H1 (cell line): ENCODE measurements at regions of chr1 and their contacts with region 1.

Region 1: GRCh38 chr1:35210321-35211119 is 17.6 kb upstream of the SFPQ start:
- DNase-seq: peak; percentile 34 to 66
- H3K4me3 ChIP-seq: peak overlapping the region in 2 of 4 experiments; percentile 0 to 40; a peak in 2 of 8 replicates
- H3K27ac ChIP-seq: peak overlapping the region; percentile 64
- H3K4me1 ChIP-seq: peaks cover 7 to 11% (median 10%) of the 10 kb centered on the region in 4 experiments; a peak in 5 of 7 replicates
- H3K27me3 ChIP-seq: no peaks in the 10 kb centered on the region
- CTCF ChIP-seq: no peak
- EP300 ChIP-seq: no peak
- POLR2A ChIP-seq: peak in 1 of 2 experiments; percentile 52; a peak in 1 of 3 replicates
- RAD21 ChIP-seq: no peak

Region 2: DNA sequence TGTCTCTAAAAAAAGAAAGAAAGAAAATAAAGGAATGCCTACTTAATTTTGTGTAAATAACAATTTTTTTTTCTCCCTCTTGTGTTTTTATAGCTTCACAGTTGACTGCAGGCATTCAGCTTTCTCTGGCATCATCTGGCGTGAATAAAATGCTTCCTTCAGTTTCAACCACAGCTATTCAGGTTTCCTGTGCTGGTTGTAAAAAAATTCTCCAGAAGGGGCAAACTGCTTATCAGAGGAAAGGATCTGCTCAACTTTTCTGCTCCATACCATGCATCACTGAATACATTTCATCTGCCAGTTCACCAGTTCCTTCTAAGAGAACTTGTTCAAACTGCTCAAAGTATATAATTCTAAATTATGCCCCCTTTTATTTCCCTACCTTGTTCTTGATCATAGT is 113.3 kb before region 1 on chr1:
- CTCF ChIA-PET with region 1: no interaction called
- POLR2A ChIA-PET with region 1: no interaction called
- DNase-seq: no peak
- H3K4me3 ChIP-seq: no peak overlapping the region
- H3K27ac ChIP-seq: no peak overlapping the region
- H3K4me1 ChIP-seq: no peaks in the 10 kb centered on the region
- H3K27me3 ChIP-seq: no peaks in the 10 kb centered on the region
- CTCF ChIP-seq: no peak
- EP300 ChIP-seq: no peak
- POLR2A ChIP-seq: no peak
- RAD21 ChIP-seq: no peak

Region 3: GRCh38 chr1:35126546-35126945 is 84.0 kb before region 1 on chr1:
- CTCF ChIA-PET with region 1: no interaction called
- POLR2A ChIA-PET with region 1: no interaction called
- DNase-seq: no peak
- H3K4me3 ChIP-seq: no peak overlapping the region
- H3K27ac ChIP-seq: no peak overlapping the region
- H3K4me1 ChIP-seq: no peaks in the 10 kb centered on the region
- H3K27me3 ChIP-seq: no peaks in the 10 kb centered on the region
- CTCF ChIP-seq: no peak
- EP300 ChIP-seq: no peak
- POLR2A ChIP-seq: no peak
- RAD21 ChIP-seq: no peak

Region 4: DNA sequence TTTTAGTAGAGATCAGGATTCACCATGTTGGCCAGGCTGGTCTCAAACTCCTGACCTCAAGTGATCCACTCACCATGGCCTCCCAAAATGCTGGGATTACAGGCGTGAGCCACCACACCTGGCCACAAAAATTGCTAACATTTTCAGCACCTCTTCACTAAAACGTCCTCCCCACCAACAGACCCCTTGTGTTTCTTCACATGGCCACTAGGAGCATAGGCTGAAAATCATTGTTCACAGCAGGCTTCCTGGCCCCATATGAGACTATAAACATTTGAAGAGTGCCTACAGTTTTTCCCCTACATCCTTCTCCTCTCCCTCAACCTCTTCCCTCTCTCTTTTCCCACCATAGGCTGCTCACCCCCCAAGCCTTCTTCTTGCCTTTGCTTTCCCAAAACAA is 10.5 kb after region 1 on chr1:
- CTCF ChIA-PET with region 1: interaction called, 14 read pairs
- POLR2A ChIA-PET with region 1: interaction called, 4 read pairs
- DNase-seq: no peak
- H3K4me3 ChIP-seq: no peak overlapping the region
- H3K27ac ChIP-seq: no peak overlapping the region
- H3K4me1 ChIP-seq: no peaks in the 10 kb centered on the region; a peak in 2 of 7 replicates
- H3K27me3 ChIP-seq: no peaks in the 10 kb centered on the region
- CTCF ChIP-seq: peak; percentile 19 to 69 (median 35); a peak in 3 of 4 replicates
- EP300 ChIP-seq: no peak
- POLR2A ChIP-seq: no peak
- RAD21 ChIP-seq: no peak